Naive thymus-derived CD4-positive, alpha-beta T cell (primary cell): ENCODE measurements at regions of chr1 and their contacts with region 1.

Region 1: GRCh38 chr1:8423650-8424538 is 106.0 kb downstream of the SLC45A1 start:
- DNase-seq: peak in 5 of 9 donors; percentile 28 to 68 (median 42)
- ATAC-seq: peak; percentile 56
- H3K4me3 ChIP-seq: peak overlapping the region; percentile 96
- H3K4me3 Mint-ChIP-seq: peak overlapping the region in 9 of 10 donors; percentile 81 to 97 (median 92)
- H3K27ac ChIP-seq: peak overlapping the region; percentile 83
- H3K27ac Mint-ChIP-seq: peak overlapping the region; percentile 85 to 99 (median 94)
- H3K4me1 ChIP-seq: peaks cover 57 to 68% of the 10 kb centered on the region in 2 donors
- H3K4me1 Mint-ChIP-seq: peaks cover 39 to 47% (median 45%) of the 10 kb centered on the region in 7 donors
- H3K27me3 ChIP-seq: no peaks in the 10 kb centered on the region
- H3K27me3 Mint-ChIP-seq: no peaks in the 10 kb centered on the region

Region 2: GRCh38 chr1:8396786-8397406 is 27.0 kb before region 1 on chr1:
- CTCF ChIA-PET with region 1: interaction called, 5 read pairs
- POLR2A ChIA-PET with region 1: interaction called, 5 read pairs
- intact Hi-C with region 1: loop called in 1 of 2 experiments (anchors 1 kb)
- DNase-seq: no peak
- ATAC-seq: peak; percentile 71
- H3K4me3 ChIP-seq: no peak overlapping the region
- H3K4me3 Mint-ChIP-seq: peak overlapping the region in 9 of 10 donors; percentile 6 to 94 (median 45)
- H3K27ac ChIP-seq: peak overlapping the region; percentile 10
- H3K27ac Mint-ChIP-seq: peak overlapping the region; percentile 36 to 95 (median 85)
- H3K4me1 ChIP-seq: peaks cover 38 to 42% of the 10 kb centered on the region in 2 donors
- H3K4me1 Mint-ChIP-seq: peaks cover 48 to 78% (median 73%) of the 10 kb centered on the region in 7 donors
- H3K27me3 ChIP-seq: no peaks in the 10 kb centered on the region
- H3K27me3 Mint-ChIP-seq: no peaks in the 10 kb centered on the region

Region 3: DNA sequence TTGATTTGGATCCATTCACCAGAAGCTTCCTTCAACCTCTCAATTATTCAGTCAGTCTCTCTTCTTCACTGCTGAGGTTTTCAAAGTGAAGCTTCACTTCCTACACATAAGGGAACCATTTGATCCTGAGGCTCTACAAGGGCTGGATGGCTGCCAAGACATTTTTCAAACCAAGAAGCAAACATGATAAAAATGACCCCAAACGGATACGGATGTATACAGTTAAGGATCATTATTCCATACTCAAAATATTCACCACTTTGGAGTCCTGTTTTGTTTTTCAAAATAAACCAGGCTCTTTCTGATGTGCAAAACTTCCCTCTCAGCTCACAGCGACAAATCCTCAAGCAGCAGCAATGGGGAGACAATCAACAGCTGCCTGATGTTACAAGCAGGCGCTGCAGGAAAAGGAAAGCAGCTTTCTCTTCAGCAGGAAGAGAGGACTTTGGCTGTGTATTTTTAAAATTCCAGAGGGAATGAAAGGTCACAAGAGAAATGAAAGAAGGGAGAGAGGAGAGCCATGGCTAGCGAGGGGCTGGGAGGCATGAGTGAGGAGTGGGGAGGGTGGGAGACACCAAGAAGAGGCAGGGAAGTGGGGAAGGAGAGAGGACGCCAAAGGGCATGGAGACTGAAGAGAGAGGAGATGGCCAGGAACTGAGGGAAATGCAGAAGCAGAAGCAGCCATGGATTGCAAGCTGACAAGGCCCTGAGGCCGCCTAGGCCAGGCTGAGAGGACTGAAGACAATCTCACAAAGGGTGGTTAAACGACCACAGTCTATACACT is 39.4 kb after region 1 on chr1:
- CTCF ChIA-PET with region 1: interaction called, 4 read pairs
- POLR2A ChIA-PET with region 1: interaction called, 21 read pairs
- intact Hi-C with region 1: loop called in 1 of 2 experiments (anchors 2 kb)
- DNase-seq: peak in 7 of 9 donors; percentile 41 to 68 (median 61)
- ATAC-seq: peak; percentile 75
- H3K4me3 ChIP-seq: no peak overlapping the region
- H3K4me3 Mint-ChIP-seq: peak overlapping the region in 9 of 10 donors; percentile 35 to 80 (median 52)
- H3K27ac ChIP-seq: peak overlapping the region; percentile 43
- H3K27ac Mint-ChIP-seq: peak overlapping the region; percentile 54 to 90 (median 85)
- H3K4me1 ChIP-seq: peaks cover 0 to 31% of the 10 kb centered on the region in 2 donors
- H3K4me1 Mint-ChIP-seq: peaks cover 20 to 82% (median 63%) of the 10 kb centered on the region in 7 donors
- H3K27me3 ChIP-seq: no peaks in the 10 kb centered on the region
- H3K27me3 Mint-ChIP-seq: no peaks in the 10 kb centered on the region

Region 4: GRCh38 chr1:8510041-8510823 is 86.3 kb after region 1 on chr1:
- CTCF ChIA-PET with region 1: no interaction called
- POLR2A ChIA-PET with region 1: interaction called, 4 read pairs
- intact Hi-C with region 1: loop called in 1 of 2 experiments (anchors 2 kb)
- DNase-seq: peak in 8 of 9 donors; percentile 55 to 88 (median 78)
- ATAC-seq: peak; percentile 94
- H3K4me3 ChIP-seq: peak overlapping the region; percentile 2
- H3K4me3 Mint-ChIP-seq: peak overlapping the region; percentile 59 to 87 (median 74)
- H3K27ac ChIP-seq: peak overlapping the region; percentile 77
- H3K27ac Mint-ChIP-seq: peak overlapping the region; percentile 86 to 97 (median 91)
- H3K4me1 ChIP-seq: peaks cover 3 to 27% of the 10 kb centered on the region in 2 donors
- H3K4me1 Mint-ChIP-seq: peaks cover 30 to 81% (median 58%) of the 10 kb centered on the region in 7 donors
- H3K27me3 ChIP-seq: no peaks in the 10 kb centered on the region
- H3K27me3 Mint-ChIP-seq: no peaks in the 10 kb centered on the region

Region 5: DNA sequence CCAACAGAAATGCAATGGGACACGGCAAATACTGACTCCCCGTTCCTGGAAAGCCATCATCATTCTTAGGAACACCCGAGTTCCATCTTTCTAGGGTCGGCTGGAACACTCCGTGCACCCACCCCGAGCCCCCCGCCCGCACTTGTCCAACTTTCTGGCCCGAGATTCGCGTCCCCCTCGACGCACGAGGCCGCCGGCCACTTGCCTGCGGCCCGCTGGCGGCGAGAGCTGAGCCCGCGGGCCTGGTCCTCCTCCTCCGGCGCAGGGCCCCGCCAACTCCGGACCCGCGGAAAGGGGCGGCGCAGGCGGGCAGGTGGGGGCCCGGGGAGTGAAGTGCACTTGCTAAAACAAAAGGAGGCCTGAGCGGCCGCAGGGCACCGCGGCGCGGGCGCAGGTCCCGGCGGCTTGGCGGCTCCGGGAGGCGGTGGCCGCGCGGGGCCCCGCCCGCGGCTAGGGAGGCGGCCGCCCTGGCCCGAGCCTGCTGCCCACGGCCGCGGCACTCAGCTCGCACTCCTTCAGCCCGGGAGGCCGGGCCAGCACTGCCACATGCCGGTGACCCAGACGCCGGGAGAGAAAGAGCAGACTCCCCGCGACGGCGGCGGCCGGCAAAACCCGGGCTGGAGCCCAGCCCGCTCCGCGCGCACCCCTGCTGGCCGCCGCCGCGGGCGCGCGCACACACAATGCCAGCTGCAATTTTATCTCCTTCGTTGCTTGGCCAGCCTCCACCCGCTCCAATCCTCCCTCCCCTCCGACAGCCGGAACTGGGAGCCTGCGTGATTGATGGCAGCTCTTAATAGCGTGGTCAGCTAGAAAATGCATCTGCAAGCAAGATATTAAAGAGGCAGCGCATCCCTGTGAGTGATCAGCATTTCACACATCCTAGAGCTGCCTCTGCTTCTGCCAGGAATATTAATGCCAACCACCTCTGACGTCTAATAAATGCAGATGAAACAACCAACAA is 279.2 kb after region 1 on chr1:
- CTCF ChIA-PET with region 1: no interaction called
- POLR2A ChIA-PET with region 1: no interaction called
- intact Hi-C with region 1: loop called (anchors 1 to 5 kb)
- DNase-seq: peak in 7 of 9 donors; percentile 22 to 83 (median 40)
- ATAC-seq: peak; percentile 72
- H3K4me3 ChIP-seq: peak overlapping the region; percentile 28
- H3K4me3 Mint-ChIP-seq: peak overlapping the region; percentile 79 to 92 (median 86)
- H3K27ac ChIP-seq: no peak overlapping the region
- H3K27ac Mint-ChIP-seq: peak overlapping the region in 6 of 9 donors; percentile 8 to 89 (median 48)
- H3K4me1 ChIP-seq: peaks cover 19 to 23% of the 10 kb centered on the region in 2 donors
- H3K4me1 Mint-ChIP-seq: peaks cover 19 to 53% (median 30%) of the 10 kb centered on the region in 7 donors
- H3K27me3 ChIP-seq: peaks cover 3 to 27% of the 10 kb centered on the region in 2 donors
- H3K27me3 Mint-ChIP-seq: peaks cover 9 to 56% (median 54%) of the 10 kb centered on the region in 5 donors